Activated CD8-positive, alpha-beta memory T cell treated with anti-CD3 and anti-CD28 coated beads, Interleukin-2, amount 10 ng/mL, durations not matched to agents 7 days and 5 days (primary cell): ENCODE measurements at regions of chr15 and their contacts with region 1.

Region 1: DNA sequence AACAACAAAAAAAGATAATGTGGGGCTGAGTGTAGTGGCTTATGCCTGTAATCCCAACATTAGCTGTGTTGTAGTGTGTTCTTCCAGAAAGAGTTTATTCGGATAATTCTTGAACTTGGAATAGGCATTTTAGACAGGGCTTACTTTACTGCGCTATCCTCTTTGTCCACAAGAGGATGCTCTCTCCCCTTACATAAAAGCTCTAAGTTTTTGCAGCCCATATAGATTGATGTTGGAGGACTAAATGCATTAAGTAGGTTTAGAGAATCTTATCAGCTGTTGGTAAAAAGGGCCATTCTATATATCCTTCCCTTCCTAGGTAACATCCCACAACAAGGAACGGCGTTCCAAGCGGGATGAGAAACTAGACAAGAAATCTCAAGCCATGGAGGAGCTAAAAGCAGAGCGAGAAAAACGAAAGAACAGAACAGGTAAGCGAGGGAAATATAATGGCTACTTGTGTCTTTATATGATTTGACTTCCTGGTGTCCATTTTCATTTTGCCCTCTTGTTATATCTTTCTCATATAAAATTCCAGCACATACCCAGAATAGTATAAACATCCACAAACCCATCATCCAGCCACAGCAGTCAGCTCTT is 27.8 kb upstream of the ITPKA start:
- DNase-seq: no peak
- ATAC-seq: peak; percentile 39
- H3K4me3 Mint-ChIP-seq: no peak overlapping the region
- H3K27ac Mint-ChIP-seq: no peak overlapping the region
- H3K4me1 Mint-ChIP-seq: peaks cover 12% of the 10 kb centered on the region
- H3K27me3 Mint-ChIP-seq: no peaks in the 10 kb centered on the region

Region 2: DNA sequence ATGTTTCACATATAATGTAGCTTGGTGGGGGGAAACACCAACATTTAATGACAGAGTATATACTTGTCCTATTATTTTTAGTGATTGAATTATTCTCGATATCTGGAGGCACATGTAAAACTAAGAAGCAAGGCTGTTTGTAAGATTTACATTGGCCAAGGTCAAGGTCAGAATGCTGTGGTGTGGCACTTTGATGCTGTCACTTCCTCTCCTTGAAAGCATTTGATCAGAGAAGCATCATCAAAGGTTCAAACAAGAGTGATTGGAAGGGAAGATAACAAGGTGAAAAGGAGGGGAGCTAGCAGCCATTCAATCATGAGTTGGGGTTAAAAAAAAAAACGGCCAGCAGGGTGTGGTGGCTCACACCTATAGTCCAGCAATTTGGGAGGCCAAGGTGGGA is 22.6 kb before region 1 on chr15:
- CTCF ChIA-PET with region 1: interaction called, 12 read pairs
- DNase-seq: no peak
- ATAC-seq: peak; percentile 66
- H3K4me3 Mint-ChIP-seq: no peak overlapping the region
- H3K27ac Mint-ChIP-seq: peak overlapping the region; percentile 47
- H3K4me1 Mint-ChIP-seq: peaks cover 9% of the 10 kb centered on the region
- H3K27me3 Mint-ChIP-seq: no peaks in the 10 kb centered on the region

Region 3: GRCh38 chr15:41493205-41493901 is 27.4 kb after region 1 on chr15 and contains the start of gene ITPKA:
- CTCF ChIA-PET with region 1: interaction called, 10 read pairs
- DNase-seq: peak; percentile 76
- ATAC-seq: peak; percentile 71
- H3K4me3 Mint-ChIP-seq: peak within 1 kb of the TSS; percentile 47
- H3K27ac Mint-ChIP-seq: no peak within 1 kb of the TSS
- H3K4me1 Mint-ChIP-seq: peaks cover 41% of the 10 kb centered on the region
- H3K27me3 Mint-ChIP-seq: peaks cover 52% of the 10 kb centered on the region
- total RNA-seq, gene ITPKA: 0.52 TPM in 1 of 2 experiments, not detected in the other